Activated CD8-positive, alpha-beta T cell treated with anti-CD3 and anti-CD28 coated beads for 36 hours (primary cell): ENCODE measurements at regions of chr11 and their contacts with region 1.

Region 1: DNA sequence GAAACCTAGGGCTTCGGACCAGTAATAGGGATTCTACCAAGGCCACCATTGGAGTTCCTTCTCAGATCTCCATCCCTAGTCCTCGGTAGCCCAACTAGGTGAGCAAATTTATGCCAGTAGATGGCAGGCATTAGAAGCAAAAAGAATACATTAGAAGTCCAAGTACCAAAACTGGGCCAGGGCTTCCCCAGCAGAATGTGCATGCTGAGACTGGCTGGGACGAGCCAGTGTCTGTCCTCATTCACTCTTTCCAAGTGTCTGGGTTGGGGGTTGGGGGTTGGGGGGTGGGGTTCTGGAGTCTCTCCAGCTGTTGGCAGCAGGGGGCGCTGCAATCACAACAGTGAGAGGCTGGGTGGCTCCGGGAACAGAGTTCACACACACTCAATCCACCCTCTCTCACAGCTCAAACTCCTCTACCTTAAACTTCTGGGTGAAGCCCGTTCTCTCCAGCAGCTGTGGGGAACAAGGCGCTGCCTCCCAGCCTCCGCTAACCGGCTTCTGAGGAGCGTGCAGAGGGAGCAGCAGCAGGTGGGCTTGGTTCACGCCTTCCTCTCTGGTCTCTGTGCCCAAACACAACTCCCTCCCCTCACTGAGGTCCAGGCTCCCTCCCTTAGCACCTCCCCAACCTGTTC is 57.5 kb downstream of the BTG4 start:
- DNase-seq: peak; percentile 87
- ATAC-seq: peak; percentile 93
- H3K4me3 Mint-ChIP-seq: no peak overlapping the region
- H3K27ac Mint-ChIP-seq: no peak overlapping the region
- H3K4me1 Mint-ChIP-seq: peaks cover 4% of the 10 kb centered on the region
- H3K27me3 Mint-ChIP-seq: peaks cover 6% of the 10 kb centered on the region
- CTCF ChIP-seq: peak; percentile 72

Region 2: DNA sequence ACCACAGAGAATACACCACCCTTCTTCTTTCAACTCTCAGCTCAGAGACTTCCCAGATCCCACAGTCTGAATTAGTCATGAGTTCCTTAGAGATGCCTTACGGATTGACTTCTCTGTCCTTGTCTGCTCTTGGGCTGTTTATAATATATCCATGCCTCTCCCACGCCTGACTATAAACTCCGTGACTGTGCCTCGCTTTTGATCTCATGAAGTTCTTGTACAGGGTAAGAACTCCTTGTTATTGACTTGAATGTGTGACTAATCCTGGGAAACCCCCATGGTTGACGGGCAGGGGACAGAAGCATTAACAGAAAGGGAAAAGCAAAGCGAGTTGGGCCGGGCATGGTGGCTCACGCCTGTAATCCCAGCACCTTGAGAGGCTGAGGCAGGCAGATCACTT is 13.2 kb before region 1 on chr11:
- CTCF ChIA-PET with region 1: interaction called, 18 read pairs
- POLR2A ChIA-PET with region 1: interaction called, 3 read pairs
- intact Hi-C with region 1: no loop called
- DNase-seq: peak; percentile 44
- ATAC-seq: no peak
- H3K4me3 Mint-ChIP-seq: no peak overlapping the region
- H3K27ac Mint-ChIP-seq: no peak overlapping the region
- H3K4me1 Mint-ChIP-seq: peaks cover 16% of the 10 kb centered on the region
- H3K27me3 Mint-ChIP-seq: no peaks in the 10 kb centered on the region
- CTCF ChIP-seq: no peak

Region 3: GRCh38 chr11:111512296-111513239 is 57.9 kb after region 1 on chr11 and contains the start of gene BTG4:
- CTCF ChIA-PET with region 1: interaction called, 11 read pairs
- POLR2A ChIA-PET with region 1: no interaction called
- intact Hi-C with region 1: no loop called
- DNase-seq: peak; percentile 54
- ATAC-seq: peak; percentile 59
- H3K4me3 Mint-ChIP-seq: peak within 1 kb of the TSS; percentile 78
- H3K27ac Mint-ChIP-seq: peak within 1 kb of the TSS; percentile 79
- H3K4me1 Mint-ChIP-seq: peaks cover 14% of the 10 kb centered on the region
- H3K27me3 Mint-ChIP-seq: peaks cover 41% of the 10 kb centered on the region
- CTCF ChIP-seq: peak; percentile 14
- total RNA-seq, gene BTG4: 0.36 to 0.98 TPM

Region 4: GRCh38 chr11:111531687-111532364 is 77.1 kb after region 1 on chr11:
- CTCF ChIA-PET with region 1: interaction called, 12 read pairs
- POLR2A ChIA-PET with region 1: no interaction called
- intact Hi-C with region 1: no loop called
- DNase-seq: peak; percentile 92
- ATAC-seq: peak; percentile 93
- H3K4me3 Mint-ChIP-seq: peak overlapping the region; percentile 57
- H3K27ac Mint-ChIP-seq: peak overlapping the region; percentile 98
- H3K4me1 Mint-ChIP-seq: peaks cover 58% of the 10 kb centered on the region
- H3K27me3 Mint-ChIP-seq: peaks cover 8% of the 10 kb centered on the region
- CTCF ChIP-seq: no peak

Region 5: GRCh38 chr11:111540114-111540936 is 85.6 kb after region 1 on chr11 and contains the start of gene LAYN:
- CTCF ChIA-PET with region 1: interaction called, 35 read pairs
- POLR2A ChIA-PET with region 1: interaction called, 4 read pairs
- intact Hi-C with region 1: loop called (anchors 10 kb)
- DNase-seq: peak; percentile 88
- ATAC-seq: peak; percentile 59
- H3K4me3 Mint-ChIP-seq: peak within 1 kb of the TSS; percentile 75
- H3K27ac Mint-ChIP-seq: peak within 1 kb of the TSS; percentile 80
- H3K4me1 Mint-ChIP-seq: peaks cover 48% of the 10 kb centered on the region
- H3K27me3 Mint-ChIP-seq: peaks cover 22% of the 10 kb centered on the region
- CTCF ChIP-seq: no peak
- total RNA-seq, gene LAYN: 92.2 to 93.7 TPM

Region 6: DNA sequence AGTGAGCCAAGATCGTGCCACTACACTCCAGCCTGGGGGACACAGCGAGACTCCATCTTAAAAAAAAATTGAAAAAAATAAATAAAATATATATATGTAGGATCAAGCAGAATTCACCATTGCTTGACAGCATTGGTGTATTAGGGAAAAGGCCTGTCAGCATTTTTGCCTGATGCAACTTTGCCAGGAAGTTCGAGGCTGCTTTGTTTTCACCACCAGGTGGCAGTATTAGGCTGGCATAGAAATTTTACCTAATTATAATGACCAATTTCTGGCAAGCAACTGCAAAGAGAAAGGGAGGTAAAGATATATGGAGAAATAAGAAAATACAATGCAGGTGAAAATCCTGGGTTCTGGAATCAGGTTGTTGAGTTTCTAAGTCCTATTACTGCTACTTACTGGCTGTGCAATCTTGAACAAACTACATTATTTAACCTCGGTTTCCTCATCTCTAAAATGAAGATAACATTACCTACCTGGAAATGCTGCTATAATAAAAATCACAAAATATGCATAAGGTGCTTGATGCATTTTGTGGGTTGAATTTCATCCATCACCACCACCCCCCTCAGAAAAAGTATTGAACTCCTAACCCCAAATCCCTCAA is 110.5 kb after region 1 on chr11:
- CTCF ChIA-PET with region 1: interaction called, 39 read pairs
- POLR2A ChIA-PET with region 1: no interaction called
- intact Hi-C with region 1: loop called (anchors 5 kb)
- DNase-seq: peak; percentile 80
- ATAC-seq: peak; percentile 45
- H3K4me3 Mint-ChIP-seq: no peak overlapping the region
- H3K27ac Mint-ChIP-seq: no peak overlapping the region
- H3K4me1 Mint-ChIP-seq: peaks cover 4% of the 10 kb centered on the region
- H3K27me3 Mint-ChIP-seq: peaks cover under 1% of the 10 kb centered on the region
- CTCF ChIP-seq: peak; percentile 97

Region 7: GRCh38 chr11:111788051-111788450 is 333.4 kb after region 1 on chr11:
- CTCF ChIA-PET with region 1: interaction called, 3 read pairs
- POLR2A ChIA-PET with region 1: no interaction called
- intact Hi-C with region 1: loop called (anchors 10 kb)
- DNase-seq: no peak
- ATAC-seq: no peak
- H3K4me3 Mint-ChIP-seq: no peak overlapping the region
- H3K27ac Mint-ChIP-seq: no peak overlapping the region
- H3K4me1 Mint-ChIP-seq: no peaks in the 10 kb centered on the region
- H3K27me3 Mint-ChIP-seq: no peaks in the 10 kb centered on the region
- CTCF ChIP-seq: no peak

Region 8: DNA sequence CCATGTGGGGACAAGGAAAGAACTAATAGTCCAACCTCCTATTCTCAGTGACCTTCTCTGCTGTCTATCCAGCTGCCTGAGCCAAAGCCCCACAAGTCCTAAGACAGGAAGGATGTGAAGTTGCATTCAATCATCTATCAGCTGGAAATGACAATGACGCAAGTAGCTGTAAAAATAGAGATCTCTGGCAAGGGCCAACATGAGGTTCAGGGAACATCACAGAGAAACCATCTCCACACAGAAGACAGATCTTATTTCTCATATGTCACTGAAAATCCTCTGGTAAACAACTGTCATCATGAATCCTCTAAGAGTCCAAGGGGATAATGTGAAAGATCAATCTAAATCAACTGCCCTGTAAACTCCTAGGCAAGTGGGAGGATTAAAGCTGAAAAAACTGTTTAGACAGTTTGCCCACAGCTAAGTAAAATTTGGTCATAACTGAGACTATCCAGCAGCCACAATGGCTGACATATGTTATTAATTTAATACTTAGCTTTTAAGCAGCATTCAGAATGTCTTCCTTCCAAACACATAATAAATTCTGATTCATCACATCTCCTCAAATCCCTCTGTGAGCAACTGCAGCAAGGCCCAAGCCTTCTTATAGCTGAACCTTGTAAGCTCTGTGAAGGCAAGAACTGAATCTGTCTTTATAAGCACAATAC is 364.6 kb after region 1 on chr11:
- CTCF ChIA-PET with region 1: no interaction called
- POLR2A ChIA-PET with region 1: no interaction called
- intact Hi-C with region 1: no loop called
- DNase-seq: no peak
- ATAC-seq: no peak
- H3K4me3 Mint-ChIP-seq: no peak overlapping the region
- H3K27ac Mint-ChIP-seq: no peak overlapping the region
- H3K4me1 Mint-ChIP-seq: peaks cover 2% of the 10 kb centered on the region
- H3K27me3 Mint-ChIP-seq: no peaks in the 10 kb centered on the region
- CTCF ChIP-seq: no peak